Body of pancreas (tissue), 4 donors: ENCODE measurements at regions of chr5 and their contacts with region 1.

Region 1: DNA sequence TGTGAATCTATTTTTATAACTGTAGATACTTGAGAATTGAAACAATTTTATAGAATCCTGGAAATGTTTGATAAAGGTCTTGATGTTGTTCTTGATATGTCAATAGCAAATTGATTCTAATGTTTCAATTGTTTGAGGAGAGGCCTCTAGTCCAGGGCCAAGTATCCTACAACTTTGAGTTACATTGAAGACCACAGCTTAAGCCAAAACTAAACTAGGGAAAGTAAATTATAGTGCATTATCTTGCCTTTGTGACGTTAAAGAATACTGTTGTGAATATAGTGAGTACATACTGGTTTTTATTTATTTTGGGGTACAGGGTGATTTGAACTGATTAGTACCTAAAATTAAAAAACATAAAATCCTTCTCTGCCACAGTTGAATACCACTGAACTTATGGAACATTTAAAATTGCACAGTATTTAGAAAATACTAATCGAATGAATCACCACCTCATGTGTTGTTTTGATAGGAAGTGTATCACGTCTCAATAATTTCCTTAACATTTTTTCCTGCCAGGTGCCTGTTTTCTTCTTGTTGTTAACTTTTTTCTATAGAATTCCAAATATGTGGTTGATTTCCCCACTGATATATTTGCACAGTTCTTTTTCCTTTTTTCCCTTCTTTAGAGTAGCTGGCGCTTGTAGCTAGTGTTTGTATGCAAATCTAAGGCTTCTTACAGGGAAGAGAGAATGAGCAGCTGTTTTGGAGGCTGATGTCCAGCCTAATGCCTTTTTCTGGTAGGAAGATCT is 12.5 kb downstream of the ARHGEF28 start:
- DNase-seq: no peak
- ATAC-seq: no peak
- H3K4me3 ChIP-seq: no peak overlapping the region
- H3K27ac ChIP-seq: no peak overlapping the region
- H3K4me1 ChIP-seq: peaks cover 40% of the 10 kb centered on the region
- H3K27me3 ChIP-seq: no peaks in the 10 kb centered on the region
- CTCF ChIP-seq: no peak
- POLR2A ChIP-seq: no peak

Region 2: GRCh38 chr5:73687357-73687756 is 48.8 kb after region 1 on chr5:
- intact Hi-C with region 1: loop called (anchors 10 kb)
- DNase-seq: no peak
- ATAC-seq: no peak
- H3K4me3 ChIP-seq: no peak overlapping the region
- H3K27ac ChIP-seq: no peak overlapping the region
- H3K4me1 ChIP-seq: peaks cover under 1% of the 10 kb centered on the region
- H3K27me3 ChIP-seq: no peaks in the 10 kb centered on the region
- CTCF ChIP-seq: no peak
- POLR2A ChIP-seq: no peak